ENCODE measurements at regions of chr16 and their contacts with region 1.

Region 1: GRCh38 chr16:11613381-11614303 is 26.9 kb upstream of the LITAF start:
- DNase-seq: peak in 1 of 9 donors; percentile 26
- ATAC-seq: peak; percentile 76
- H3K4me3 ChIP-seq: no peak overlapping the region
- H3K4me3 Mint-ChIP-seq: peak overlapping the region in 1 of 10 donors; percentile 9
- H3K27ac ChIP-seq: no peak overlapping the region
- H3K27ac Mint-ChIP-seq: peak overlapping the region in 5 of 9 donors; percentile 28 to 87 (median 56)
- H3K4me1 ChIP-seq: peaks cover 16% of the 10 kb centered on the region in 2 donors
- H3K4me1 Mint-ChIP-seq: peaks cover 26 to 51% (median 38%) of the 10 kb centered on the region in 7 donors
- H3K27me3 ChIP-seq: no peaks in the 10 kb centered on the region
- H3K27me3 Mint-ChIP-seq: peaks cover 0 to 10% (median 0%) of the 10 kb centered on the region in 5 donors

Region 2: GRCh38 chr16:11597239-11598101 is 16.2 kb before region 1 on chr16:
- CTCF ChIA-PET with region 1: interaction called, 6 read pairs
- POLR2A ChIA-PET with region 1: interaction called, 68 read pairs
- intact Hi-C with region 1: no loop called
- DNase-seq: peak in 2 of 9 donors; percentile 24
- ATAC-seq: peak; percentile 85
- H3K4me3 ChIP-seq: no peak overlapping the region
- H3K4me3 Mint-ChIP-seq: peak overlapping the region in 4 of 10 donors; percentile 9 to 54 (median 14)
- H3K27ac ChIP-seq: peak overlapping the region; percentile 34
- H3K27ac Mint-ChIP-seq: peak overlapping the region; percentile 40 to 88 (median 81)
- H3K4me1 ChIP-seq: peaks cover 0 to 13% of the 10 kb centered on the region in 2 donors
- H3K4me1 Mint-ChIP-seq: peaks cover 8 to 26% (median 16%) of the 10 kb centered on the region in 7 donors
- H3K27me3 ChIP-seq: no peaks in the 10 kb centered on the region
- H3K27me3 Mint-ChIP-seq: peaks cover 0 to 5% (median 0%) of the 10 kb centered on the region in 5 donors